ENCODE measurements at regions of chr12 and their contacts with region 1.

Region 1: DNA sequence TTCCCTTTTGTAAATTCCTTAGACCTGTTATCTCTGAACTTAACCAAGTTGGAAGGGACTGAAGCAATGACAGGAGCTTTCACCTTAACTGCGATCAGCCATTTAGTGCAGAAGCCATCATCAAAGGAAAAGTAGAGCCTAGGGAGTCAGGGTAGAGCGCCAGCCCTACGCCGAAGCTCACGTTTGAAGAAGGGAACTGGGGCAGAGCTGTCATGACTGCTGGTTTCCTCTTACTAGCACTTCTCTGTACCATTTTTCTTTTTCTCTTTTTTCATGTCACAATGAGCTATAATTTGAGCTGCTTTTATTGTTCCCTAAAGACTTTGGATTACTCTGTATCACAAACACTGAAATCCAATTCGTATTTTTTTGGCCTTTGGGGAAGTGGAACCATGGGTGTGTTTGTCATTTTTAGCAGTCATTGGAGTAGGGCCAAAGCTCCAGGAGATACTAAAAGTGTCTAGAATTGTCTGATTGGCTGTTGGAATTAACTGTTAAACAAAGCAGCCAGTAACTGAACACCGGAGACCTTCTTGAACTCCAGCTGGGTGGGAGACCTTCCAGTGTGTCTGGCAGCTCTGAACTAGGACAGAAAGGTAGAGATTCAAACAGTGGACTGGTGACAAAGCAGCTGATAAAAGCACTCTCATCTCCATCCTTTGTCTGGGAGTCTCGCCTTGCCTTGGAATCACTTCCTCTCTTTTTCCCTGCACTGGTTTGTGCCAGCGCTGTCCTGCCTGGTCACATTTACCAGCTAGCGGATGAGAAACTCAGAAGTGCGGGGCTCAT is 9.1 kb downstream of the MTRFR start:
- DNase-seq: no peak
- ATAC-seq: peak in 3 of 4 donors; percentile 10 to 43 (median 35)
- H3K4me3 ChIP-seq: no peak overlapping the region
- H3K27ac ChIP-seq: no peak overlapping the region
- H3K4me1 ChIP-seq: peaks cover 0 to 8% (median 0%) of the 10 kb centered on the region in 4 donors
- H3K27me3 ChIP-seq: no peaks in the 10 kb centered on the region
- CTCF ChIP-seq: no peak
- POLR2A ChIP-seq: no peak

Region 2: GRCh38 chr12:122995503-122996187 is 246.7 kb before region 1 on chr12:
- intact Hi-C with region 1: loop called in 1 of 2 experiments (anchors 10 kb)
- DNase-seq: peak; percentile 91 to 98 (median 95)
- ATAC-seq: peak; percentile 81 to 85 (median 82)
- H3K4me3 ChIP-seq: peak overlapping the region in 2 of 3 donors; percentile 38 to 53
- H3K27ac ChIP-seq: peak overlapping the region in 2 of 3 donors; percentile 56 to 66
- H3K4me1 ChIP-seq: peaks cover 0 to 65% (median 30%) of the 10 kb centered on the region in 4 donors
- H3K27me3 ChIP-seq: no peaks in the 10 kb centered on the region
- CTCF ChIP-seq: no peak
- POLR2A ChIP-seq: no peak

Region 3: GRCh38 chr12:123533672-123534643 is 291.6 kb after region 1 on chr12 and contains the start of gene RILPL1:
- intact Hi-C with region 1: no loop called
- DNase-seq: peak; percentile 60 to 64 (median 61)
- ATAC-seq: peak; percentile 63 to 73 (median 66)
- H3K4me3 ChIP-seq: peak within 1 kb of the TSS; percentile 60 to 86 (median 60)
- H3K27ac ChIP-seq: peak within 1 kb of the TSS; percentile 46 to 54 (median 53)
- H3K4me1 ChIP-seq: peaks cover 0 to 14% (median 6%) of the 10 kb centered on the region in 4 donors
- H3K27me3 ChIP-seq: no peaks in the 10 kb centered on the region
- CTCF ChIP-seq: peak in 3 of 4 donors; percentile 24 to 50 (median 25)
- POLR2A ChIP-seq: no peak
- total RNA-seq, gene RILPL1: 3.2 to 7.5 (median 5.3) TPM